Vagina (tissue), 2 donors: ENCODE measurements at regions of chr17 and their contacts with region 1.

Region 1: GRCh38 chr17:78421484-78422266 is 43.2 kb downstream of the PGS1 start:
- DNase-seq: no peak
- H3K4me3 ChIP-seq: no peak overlapping the region
- H3K27ac ChIP-seq: no peak overlapping the region
- H3K4me1 ChIP-seq: peaks cover 8% of the 10 kb centered on the region
- H3K27me3 ChIP-seq: no peaks in the 10 kb centered on the region
- CTCF ChIP-seq: peak; percentile 97 to 98 (median 97)
- POLR2A ChIP-seq: no peak

Region 2: GRCh38 chr17:78089576-78090281 is 331.9 kb before region 1 on chr17:
- intact Hi-C with region 1: loop called (anchors 10 kb)
- DNase-seq: no peak
- H3K4me3 ChIP-seq: no peak overlapping the region
- H3K27ac ChIP-seq: no peak overlapping the region
- H3K4me1 ChIP-seq: no peaks in the 10 kb centered on the region
- H3K27me3 ChIP-seq: no peaks in the 10 kb centered on the region
- CTCF ChIP-seq: no peak
- POLR2A ChIP-seq: no peak

Region 3: GRCh38 chr17:78250891-78251794 is 170.5 kb before region 1 on chr17:
- intact Hi-C with region 1: loop called (anchors 10 kb)
- DNase-seq: no peak
- H3K4me3 ChIP-seq: no peak overlapping the region
- H3K27ac ChIP-seq: no peak overlapping the region
- H3K4me1 ChIP-seq: peaks cover 25% of the 10 kb centered on the region
- H3K27me3 ChIP-seq: no peaks in the 10 kb centered on the region
- CTCF ChIP-seq: peak; percentile 97 to 99 (median 97)
- POLR2A ChIP-seq: no peak

Region 4: GRCh38 chr17:78289802-78290363 is 131.8 kb before region 1 on chr17:
- intact Hi-C with region 1: loop called (anchors 5 kb)
- DNase-seq: no peak
- H3K4me3 ChIP-seq: no peak overlapping the region
- H3K27ac ChIP-seq: no peak overlapping the region
- H3K4me1 ChIP-seq: no peaks in the 10 kb centered on the region
- H3K27me3 ChIP-seq: no peaks in the 10 kb centered on the region
- CTCF ChIP-seq: peak in 2 of 3 experiments; percentile 42 to 85
- POLR2A ChIP-seq: no peak

Region 5: DNA sequence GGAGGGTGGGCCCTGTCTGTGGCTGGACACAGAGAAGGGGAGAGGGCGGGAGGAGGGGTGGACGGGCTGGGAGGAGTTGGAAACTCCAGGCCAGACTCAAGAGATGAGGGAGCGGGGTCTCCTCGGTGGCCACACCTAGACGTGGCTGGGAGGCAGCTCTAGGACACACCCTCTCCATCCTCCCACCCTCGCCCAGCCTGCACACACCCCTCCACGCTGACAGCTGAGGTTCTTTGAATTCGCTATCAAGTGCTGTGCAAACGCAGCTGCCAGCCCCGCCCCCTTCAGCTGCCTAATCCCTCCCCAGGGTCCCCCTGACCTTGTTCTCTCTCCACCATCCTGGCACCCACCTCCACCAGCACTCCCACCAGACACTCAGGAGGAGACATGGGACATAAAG is 106.9 kb after region 1 on chr17:
- intact Hi-C with region 1: no loop called
- DNase-seq: no peak
- H3K4me3 ChIP-seq: no peak overlapping the region
- H3K27ac ChIP-seq: no peak overlapping the region
- H3K4me1 ChIP-seq: no peaks in the 10 kb centered on the region
- H3K27me3 ChIP-seq: no peaks in the 10 kb centered on the region
- CTCF ChIP-seq: no peak
- POLR2A ChIP-seq: no peak

Region 6: DNA sequence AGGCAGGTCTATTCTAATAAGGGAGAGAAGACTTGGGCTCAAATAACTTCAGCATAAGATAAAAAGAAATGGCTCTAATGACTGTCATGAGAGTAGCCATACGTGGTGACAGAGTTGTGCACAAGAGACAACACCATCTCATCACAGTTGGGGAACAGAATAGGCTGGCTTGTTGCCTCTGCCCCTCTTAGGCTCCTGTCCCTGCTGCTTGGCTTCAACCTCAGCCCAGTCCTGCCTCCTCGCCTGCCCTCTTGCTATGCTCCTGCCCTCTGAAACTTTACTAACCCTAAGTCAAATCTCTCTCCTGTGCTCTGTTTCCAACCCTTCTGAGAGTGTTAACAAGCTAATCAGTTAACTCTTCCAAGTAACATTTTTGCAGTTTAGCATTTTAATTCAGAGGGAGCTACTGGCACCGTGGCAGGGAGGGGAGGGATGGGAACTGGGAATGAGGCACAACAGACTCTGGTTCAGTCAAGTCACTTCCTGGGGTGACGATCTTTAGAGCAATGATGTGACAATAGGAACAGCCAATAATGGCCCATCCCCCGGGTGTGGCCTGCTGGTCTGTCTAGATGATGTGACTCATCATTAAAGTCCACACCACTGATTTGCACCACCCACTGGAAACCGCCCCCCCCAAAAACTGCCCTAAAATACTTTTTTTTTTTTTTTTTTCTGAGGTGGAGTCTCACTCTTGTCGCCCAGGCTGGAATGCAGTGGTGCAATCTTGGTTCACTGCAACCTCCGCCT is 120.0 kb after region 1 on chr17:
- intact Hi-C with region 1: no loop called
- DNase-seq: no peak
- H3K4me3 ChIP-seq: no peak overlapping the region
- H3K27ac ChIP-seq: no peak overlapping the region
- H3K4me1 ChIP-seq: no peaks in the 10 kb centered on the region
- H3K27me3 ChIP-seq: no peaks in the 10 kb centered on the region
- CTCF ChIP-seq: no peak
- POLR2A ChIP-seq: no peak